ENCODE measurements at regions of chr18 and their contacts with region 1.

Region 1: GRCh38 chr18:61606759-61607158 is 273.5 kb downstream of the CDH20 start:
- DNase-seq: peak; percentile 98
- H3K4me3 ChIP-seq: peak overlapping the region in 1 of 3 experiments; percentile 6
- H3K27ac ChIP-seq: peak overlapping the region; percentile 97
- H3K4me1 ChIP-seq: peaks cover 71% of the 10 kb centered on the region
- H3K27me3 ChIP-seq: no peaks in the 10 kb centered on the region
- CTCF ChIP-seq: no peak
- POLR2A ChIP-seq: peak; percentile 87

Region 2: GRCh38 chr18:60984510-60984909 is 622.2 kb before region 1 on chr18:
- CTCF ChIA-PET with region 1: no interaction called
- POLR2A ChIA-PET with region 1: no interaction called
- dilution Hi-C with region 1: no loop called
- intact Hi-C with region 1: loop called (anchors 5 kb)
- DNase-seq: no peak
- H3K4me3 ChIP-seq: no peak overlapping the region
- H3K27ac ChIP-seq: no peak overlapping the region
- H3K4me1 ChIP-seq: peaks cover 34% of the 10 kb centered on the region
- H3K27me3 ChIP-seq: no peaks in the 10 kb centered on the region
- CTCF ChIP-seq: no peak
- POLR2A ChIP-seq: no peak

Region 3: GRCh38 chr18:61581578-61582201 is 25.1 kb before region 1 on chr18:
- CTCF ChIA-PET with region 1: interaction called, 43 read pairs
- POLR2A ChIA-PET with region 1: no interaction called
- dilution Hi-C with region 1: no loop called
- intact Hi-C with region 1: loop called (anchors 1 kb)
- DNase-seq: peak; percentile 77
- H3K4me3 ChIP-seq: peak overlapping the region; percentile 40 to 56 (median 54)
- H3K27ac ChIP-seq: peak overlapping the region; percentile 25
- H3K4me1 ChIP-seq: peaks cover 18% of the 10 kb centered on the region
- H3K27me3 ChIP-seq: no peaks in the 10 kb centered on the region
- CTCF ChIP-seq: peak; percentile 97
- POLR2A ChIP-seq: no peak

Region 4: GRCh38 chr18:61690418-61691138 is 83.8 kb after region 1 on chr18:
- CTCF ChIA-PET with region 1: no interaction called
- POLR2A ChIA-PET with region 1: no interaction called
- dilution Hi-C with region 1: no loop called
- intact Hi-C with region 1: loop called (anchors 2 kb)
- DNase-seq: no peak
- H3K4me3 ChIP-seq: no peak overlapping the region
- H3K27ac ChIP-seq: no peak overlapping the region
- H3K4me1 ChIP-seq: peaks cover 16% of the 10 kb centered on the region
- H3K27me3 ChIP-seq: no peaks in the 10 kb centered on the region
- CTCF ChIP-seq: no peak
- POLR2A ChIP-seq: no peak

Region 5: GRCh38 chr18:61992285-61992684 is 385.5 kb after region 1 on chr18:
- CTCF ChIA-PET with region 1: no interaction called
- POLR2A ChIA-PET with region 1: no interaction called
- dilution Hi-C with region 1: no loop called
- intact Hi-C with region 1: loop called (anchors 1 kb)
- DNase-seq: peak; percentile 95
- H3K4me3 ChIP-seq: peak overlapping the region in 1 of 3 experiments; percentile 13
- H3K27ac ChIP-seq: peak overlapping the region; percentile 98
- H3K4me1 ChIP-seq: peaks cover 58% of the 10 kb centered on the region
- H3K27me3 ChIP-seq: no peaks in the 10 kb centered on the region
- CTCF ChIP-seq: no peak
- POLR2A ChIP-seq: peak; percentile 33